ENCODE measurements at regions of chr5 and their contacts with region 1.

Region 1: GRCh38 chr5:61215996-61216395 is 53.7 kb upstream of the SMIM15 start:
- DNase-seq: no peak
- ATAC-seq: no peak
- H3K4me3 ChIP-seq: no peak overlapping the region
- H3K4me3 Mint-ChIP-seq: no peak overlapping the region
- H3K27ac ChIP-seq: no peak overlapping the region
- H3K27ac Mint-ChIP-seq: no peak overlapping the region
- H3K4me1 ChIP-seq: no peaks in the 10 kb centered on the region
- H3K4me1 Mint-ChIP-seq: no peaks in the 10 kb centered on the region
- H3K27me3 ChIP-seq: peaks cover 6% of the 10 kb centered on the region in 2 experiments
- H3K27me3 Mint-ChIP-seq: peaks cover 3% of the 10 kb centered on the region
- CTCF ChIP-seq: no peak

Region 2: GRCh38 chr5:61023131-61023530 is 192.9 kb before region 1 on chr5:
- CTCF ChIA-PET with region 1: no interaction called
- POLR2A ChIA-PET with region 1: no interaction called
- intact Hi-C with region 1: no loop called
- DNase-seq: no peak
- ATAC-seq: no peak
- H3K4me3 ChIP-seq: no peak overlapping the region
- H3K4me3 Mint-ChIP-seq: no peak overlapping the region
- H3K27ac ChIP-seq: no peak overlapping the region
- H3K27ac Mint-ChIP-seq: no peak overlapping the region
- H3K4me1 ChIP-seq: no peaks in the 10 kb centered on the region
- H3K4me1 Mint-ChIP-seq: peaks cover 28% of the 10 kb centered on the region
- H3K27me3 ChIP-seq: no peaks in the 10 kb centered on the region
- H3K27me3 Mint-ChIP-seq: no peaks in the 10 kb centered on the region
- CTCF ChIP-seq: no peak

Region 3: DNA sequence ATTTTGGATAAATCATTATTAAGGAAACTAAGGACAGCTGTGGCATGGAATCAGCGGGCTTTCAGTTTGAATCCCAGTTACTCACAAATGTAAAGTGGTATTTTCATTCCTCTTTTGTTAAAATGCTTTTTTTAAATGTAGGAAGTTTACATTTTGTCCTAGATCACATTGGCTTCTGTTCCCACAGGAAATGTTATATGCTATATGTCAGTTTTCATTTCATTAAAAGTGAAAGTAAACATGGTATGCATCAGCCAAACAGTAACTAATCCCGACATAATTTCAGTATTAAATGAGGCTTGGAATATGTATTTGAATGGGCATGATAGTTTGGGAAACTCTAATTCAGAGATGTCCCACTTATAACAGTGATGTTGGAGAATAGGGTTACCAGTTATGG is 35.1 kb before region 1 on chr5:
- CTCF ChIA-PET with region 1: interaction called, 3 read pairs
- POLR2A ChIA-PET with region 1: no interaction called
- intact Hi-C with region 1: loop called in 1 of 2 experiments (anchors 2 kb)
- DNase-seq: no peak
- ATAC-seq: no peak
- H3K4me3 ChIP-seq: no peak overlapping the region
- H3K4me3 Mint-ChIP-seq: no peak overlapping the region
- H3K27ac ChIP-seq: no peak overlapping the region
- H3K27ac Mint-ChIP-seq: no peak overlapping the region
- H3K4me1 ChIP-seq: no peaks in the 10 kb centered on the region
- H3K4me1 Mint-ChIP-seq: peaks cover 7% of the 10 kb centered on the region
- H3K27me3 ChIP-seq: no peaks in the 10 kb centered on the region
- H3K27me3 Mint-ChIP-seq: no peaks in the 10 kb centered on the region
- CTCF ChIP-seq: no peak

Region 4: GRCh38 chr5:62043289-62044280 is 827.6 kb after region 1 on chr5:
- CTCF ChIA-PET with region 1: no interaction called
- POLR2A ChIA-PET with region 1: no interaction called
- intact Hi-C with region 1: no loop called
- DNase-seq: no peak
- ATAC-seq: no peak
- H3K4me3 ChIP-seq: no peak overlapping the region
- H3K4me3 Mint-ChIP-seq: no peak overlapping the region
- H3K27ac ChIP-seq: no peak overlapping the region
- H3K27ac Mint-ChIP-seq: no peak overlapping the region
- H3K4me1 ChIP-seq: no peaks in the 10 kb centered on the region
- H3K4me1 Mint-ChIP-seq: no peaks in the 10 kb centered on the region
- H3K27me3 ChIP-seq: no peaks in the 10 kb centered on the region
- H3K27me3 Mint-ChIP-seq: peaks cover 20% of the 10 kb centered on the region
- CTCF ChIP-seq: no peak

Region 5: GRCh38 chr5:62828742-62829603 is 1613.0 kb after region 1 on chr5:
- CTCF ChIA-PET with region 1: no interaction called
- POLR2A ChIA-PET with region 1: no interaction called
- intact Hi-C with region 1: no loop called
- DNase-seq: no peak
- ATAC-seq: no peak
- H3K4me3 ChIP-seq: no peak overlapping the region
- H3K4me3 Mint-ChIP-seq: no peak overlapping the region
- H3K27ac ChIP-seq: no peak overlapping the region
- H3K27ac Mint-ChIP-seq: no peak overlapping the region
- H3K4me1 ChIP-seq: no peaks in the 10 kb centered on the region
- H3K4me1 Mint-ChIP-seq: no peaks in the 10 kb centered on the region
- H3K27me3 ChIP-seq: no peaks in the 10 kb centered on the region
- H3K27me3 Mint-ChIP-seq: peaks cover 10% of the 10 kb centered on the region
- CTCF ChIP-seq: no peak